ENCODE measurements at regions of chr16 and their contacts with region 1.

Region 1: GRCh38 chr16:30724641-30725417 is 23.4 kb upstream of the PHKG2 start:
- DNase-seq: no peak

Region 2: GRCh38 chr16:29900102-29900887 is 824.5 kb before region 1 on chr16 and contains the start of gene ASPHD1:
- CTCF ChIA-PET with region 1: no interaction called
- POLR2A ChIA-PET with region 1: no interaction called
- DNase-seq: peak; percentile 92

Region 3: DNA sequence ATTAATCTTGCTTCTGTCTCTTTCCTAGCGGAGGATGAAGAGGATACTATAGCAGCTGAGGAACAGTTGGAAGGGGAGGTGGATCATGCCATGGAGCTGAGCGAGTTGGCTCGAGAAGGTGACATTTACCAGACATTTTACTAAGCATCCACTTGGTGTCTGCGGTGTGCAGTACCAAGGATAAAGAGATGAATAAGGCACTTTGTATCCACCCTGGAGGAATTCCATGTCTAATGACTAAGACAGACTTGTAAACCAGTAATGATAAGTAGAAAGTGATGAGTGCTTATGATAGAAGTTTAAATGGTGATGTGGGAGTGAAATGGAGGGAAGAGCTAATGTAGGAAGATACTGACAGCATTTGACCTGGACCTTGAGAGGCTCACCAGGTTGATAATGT is 13.9 kb before region 1 on chr16:
- CTCF ChIA-PET with region 1: no interaction called
- POLR2A ChIA-PET with region 1: interaction called, 10 read pairs
- DNase-seq: no peak

Region 4: GRCh38 chr16:30761928-30762810 is 37.3 kb after region 1 on chr16 and contains the starts of genes CFAP119 and RNF40:
- CTCF ChIA-PET with region 1: no interaction called
- POLR2A ChIA-PET with region 1: no interaction called
- DNase-seq: peak; percentile 100

Region 5: GRCh38 chr16:30839523-30840227 is 114.8 kb after region 1 on chr16:
- CTCF ChIA-PET with region 1: no interaction called
- POLR2A ChIA-PET with region 1: no interaction called
- DNase-seq: no peak

Measured in HEK293T (cell line).